ENCODE measurements at regions of chr5 and their contacts with region 1.

Region 1: DNA sequence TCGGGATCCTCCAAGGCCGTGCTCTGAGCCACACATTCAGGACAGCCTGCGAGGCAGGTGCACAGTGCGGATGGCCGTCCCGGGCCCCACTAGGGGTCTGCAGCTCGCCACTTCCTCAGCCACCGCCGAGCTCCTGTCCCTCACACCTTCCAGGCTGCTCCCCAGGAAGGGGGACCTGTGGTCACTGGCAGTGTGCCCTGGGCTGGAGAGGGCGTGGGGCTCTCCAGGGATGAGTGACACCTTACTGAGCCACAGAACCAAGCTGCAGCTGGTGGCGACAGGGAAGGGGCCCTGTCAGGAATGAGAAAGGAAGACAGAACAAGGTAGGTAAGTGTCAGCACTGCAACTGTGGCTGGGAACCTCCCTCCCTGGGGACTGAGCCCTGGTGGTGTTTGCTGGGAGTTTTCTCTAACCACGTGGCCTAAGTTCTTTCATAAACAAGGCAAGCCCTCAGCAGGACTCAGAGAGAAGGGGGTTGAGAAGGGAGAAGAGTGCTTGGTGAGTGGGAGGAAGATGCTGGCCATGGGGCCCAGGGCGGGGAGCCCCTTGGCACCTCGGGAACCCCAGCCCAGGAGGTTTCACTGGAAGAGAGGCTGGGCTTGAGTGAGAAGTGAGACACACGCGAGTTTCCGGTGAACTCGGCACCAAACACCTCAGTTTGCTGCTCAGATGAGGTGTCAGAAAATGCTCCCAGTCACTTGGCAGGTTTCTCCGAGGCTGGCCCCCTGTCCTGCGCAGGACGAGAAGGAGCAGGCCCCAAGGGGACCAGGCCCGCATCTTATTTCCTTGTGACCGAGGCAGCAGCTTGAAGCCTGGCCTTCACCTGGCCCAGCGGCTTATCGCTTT is 5.2 kb downstream of the IL13 start:
- DNase-seq: peak; percentile 86
- H3K4me3 Mint-ChIP-seq: no peak overlapping the region
- H3K27ac Mint-ChIP-seq: peak overlapping the region; percentile 90
- H3K4me1 Mint-ChIP-seq: peaks cover 46% of the 10 kb centered on the region
- H3K27me3 Mint-ChIP-seq: peaks cover under 1% of the 10 kb centered on the region

Region 2: GRCh38 chr5:132674671-132675506 is 11.7 kb after region 1 on chr5:
- CTCF ChIA-PET with region 1: interaction called, 3 read pairs
- POLR2A ChIA-PET with region 1: interaction called, 12 read pairs
- intact Hi-C with region 1: loop called (anchors 1 kb)
- DNase-seq: no peak
- H3K4me3 Mint-ChIP-seq: peak overlapping the region; percentile 28
- H3K27ac Mint-ChIP-seq: peak overlapping the region; percentile 73
- H3K4me1 Mint-ChIP-seq: peaks cover 27% of the 10 kb centered on the region
- H3K27me3 Mint-ChIP-seq: no peaks in the 10 kb centered on the region

Region 3: GRCh38 chr5:132688536-132689339 is 25.6 kb after region 1 on chr5:
- CTCF ChIA-PET with region 1: no interaction called
- POLR2A ChIA-PET with region 1: no interaction called
- intact Hi-C with region 1: loop called (anchors 1 kb)
- DNase-seq: peak; percentile 36
- H3K4me3 Mint-ChIP-seq: no peak overlapping the region
- H3K27ac Mint-ChIP-seq: peak overlapping the region; percentile 24
- H3K4me1 Mint-ChIP-seq: peaks cover 36% of the 10 kb centered on the region
- H3K27me3 Mint-ChIP-seq: no peaks in the 10 kb centered on the region

Region 4: DNA sequence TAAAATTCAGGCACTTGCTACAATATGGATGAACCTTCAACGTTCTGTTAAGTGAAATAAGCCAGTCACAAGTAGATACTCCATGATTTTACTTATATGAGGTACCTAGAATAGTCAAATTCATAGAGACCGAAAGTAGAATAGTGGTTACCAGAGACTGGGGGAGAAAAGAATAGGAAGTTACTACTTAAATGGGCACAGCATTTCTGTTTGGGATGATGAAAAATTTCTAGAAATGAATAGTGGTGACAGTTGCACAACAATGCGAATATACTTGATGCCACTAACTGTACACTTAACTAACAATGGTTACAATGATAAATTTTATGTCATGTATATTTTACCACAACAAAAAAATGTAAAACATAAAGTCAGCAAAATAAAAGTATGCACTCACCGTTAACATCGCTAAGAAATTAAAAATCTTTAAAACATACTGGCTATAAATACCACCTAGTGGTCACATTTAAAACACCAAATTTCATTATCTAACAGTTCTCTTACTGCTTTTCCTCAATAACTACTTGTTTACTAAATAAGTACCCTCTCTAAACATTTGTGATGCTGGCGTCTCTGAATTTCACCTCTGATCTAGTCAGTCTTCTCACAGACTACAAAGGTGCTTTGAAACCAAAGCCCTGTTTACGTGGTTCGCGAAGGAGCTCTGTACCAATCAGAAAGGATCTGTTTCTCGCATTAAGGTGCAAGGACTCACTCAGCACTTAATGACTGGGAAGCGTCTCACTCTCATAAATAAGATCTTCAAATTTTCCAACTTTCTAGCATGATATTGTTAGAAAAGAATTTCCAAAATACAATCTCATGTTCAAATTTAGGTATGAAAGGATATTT is 51.5 kb after region 1 on chr5:
- CTCF ChIA-PET with region 1: no interaction called
- POLR2A ChIA-PET with region 1: no interaction called
- intact Hi-C with region 1: loop called (anchors 1 kb)
- DNase-seq: no peak
- H3K4me3 Mint-ChIP-seq: no peak overlapping the region
- H3K27ac Mint-ChIP-seq: no peak overlapping the region
- H3K4me1 Mint-ChIP-seq: peaks cover 14% of the 10 kb centered on the region
- H3K27me3 Mint-ChIP-seq: no peaks in the 10 kb centered on the region

Region 5: DNA sequence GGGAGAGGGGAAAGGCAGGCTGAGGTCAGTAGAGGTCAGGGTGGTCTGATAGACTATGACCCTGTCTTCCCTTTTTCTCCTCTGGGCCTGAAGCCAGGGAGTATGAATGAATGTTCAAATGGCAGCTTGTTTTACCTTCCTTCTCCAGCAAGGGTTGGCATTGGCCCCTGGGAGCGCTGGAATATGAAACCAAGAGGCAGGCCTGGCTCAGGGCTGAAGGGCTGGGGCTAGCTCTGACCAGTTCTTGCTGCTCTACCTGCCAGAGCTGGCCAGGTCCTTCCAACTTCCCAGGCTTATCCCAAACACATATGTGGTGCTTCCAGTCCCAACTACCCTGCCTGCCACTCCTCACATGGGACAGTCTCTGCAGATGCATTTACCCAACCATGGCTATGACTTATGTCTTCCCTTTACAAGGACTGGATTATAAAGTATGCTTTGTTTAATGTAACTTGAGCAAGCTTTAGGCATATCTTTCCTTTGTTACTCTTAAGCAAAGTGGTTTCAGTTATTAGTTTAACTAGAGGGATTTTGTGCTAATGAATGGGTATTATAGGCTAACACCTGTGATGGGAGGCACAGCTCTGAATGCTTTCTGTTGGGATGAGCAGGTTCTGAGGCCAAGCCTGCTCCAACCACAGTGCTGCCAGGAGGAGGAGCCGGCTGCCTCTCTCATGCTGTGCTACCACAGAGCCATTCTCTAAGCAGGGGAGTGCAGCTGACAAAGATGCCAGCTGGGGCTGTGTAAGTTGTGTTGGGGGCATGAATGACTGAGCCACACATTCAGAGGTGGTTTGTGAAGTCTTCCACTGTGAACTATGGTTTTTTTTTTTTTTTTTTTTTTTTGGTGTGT is 90.2 kb after region 1 on chr5:
- CTCF ChIA-PET with region 1: no interaction called
- POLR2A ChIA-PET with region 1: no interaction called
- intact Hi-C with region 1: loop called (anchors 5 kb)
- DNase-seq: peak; percentile 47
- H3K4me3 Mint-ChIP-seq: no peak overlapping the region
- H3K27ac Mint-ChIP-seq: no peak overlapping the region
- H3K4me1 Mint-ChIP-seq: peaks cover 38% of the 10 kb centered on the region
- H3K27me3 Mint-ChIP-seq: no peaks in the 10 kb centered on the region